ENCODE measurements at regions of chr5 and their contacts with region 1.

Region 1: DNA sequence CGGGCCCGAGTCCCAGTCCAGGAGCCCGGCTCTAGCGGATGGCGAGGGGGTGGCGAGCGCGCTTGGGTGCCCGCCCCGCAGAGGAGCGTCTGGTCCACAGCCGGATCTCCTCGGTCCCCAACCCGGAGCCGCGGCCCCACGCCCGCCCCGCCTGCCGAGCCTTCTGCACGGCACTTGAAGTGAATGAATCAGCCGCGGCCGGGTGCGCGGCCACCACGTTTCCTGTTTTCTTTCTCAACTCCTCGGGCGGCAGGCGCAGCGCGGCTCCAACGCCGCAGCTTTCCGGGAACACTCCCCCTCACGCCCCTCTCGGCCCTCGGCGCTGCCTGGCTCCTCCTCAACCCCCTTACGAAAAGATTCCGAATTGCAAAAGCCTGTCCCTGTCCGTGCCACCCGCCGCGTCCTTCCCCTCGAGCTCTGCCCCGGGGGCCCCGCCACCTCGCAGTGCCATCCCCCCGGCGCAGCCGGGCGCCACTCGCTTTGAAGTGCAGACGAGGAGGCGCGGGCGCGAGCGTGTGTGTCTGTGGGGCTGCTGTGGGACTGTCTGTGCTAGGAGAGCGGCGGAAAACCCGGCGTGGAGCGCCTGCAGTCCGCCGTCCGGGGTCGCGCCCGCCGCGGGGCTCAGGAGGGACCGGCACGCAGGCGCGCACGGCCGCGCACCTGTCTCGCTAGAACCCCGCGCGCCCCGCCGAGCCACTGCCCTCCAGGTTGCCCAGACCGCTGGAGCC is 456.6 kb downstream of the RAB3C start:
- DNase-seq: peak; percentile 84 to 92
- H3K4me3 ChIP-seq: peak overlapping the region; percentile 63 to 79
- H3K27ac ChIP-seq: peak overlapping the region; percentile 79 to 84
- H3K4me1 ChIP-seq: peaks cover 0 to 69% (median 15%) of the 10 kb centered on the region in 4 donors
- H3K27me3 ChIP-seq: no peaks in the 10 kb centered on the region
- CTCF ChIP-seq: no peak

Region 2: GRCh38 chr5:58922461-58923171 is 116.8 kb before region 1 on chr5:
- intact Hi-C with region 1: loop called (anchors 10 kb)
- DNase-seq: peak; percentile 84 to 97
- H3K4me3 ChIP-seq: peak overlapping the region; percentile 16 to 30
- H3K27ac ChIP-seq: peak overlapping the region; percentile 88 to 92
- H3K4me1 ChIP-seq: peaks cover 0 to 81% (median 58%) of the 10 kb centered on the region in 4 donors
- H3K27me3 ChIP-seq: no peaks in the 10 kb centered on the region
- CTCF ChIP-seq: peak in 1 of 2 experiments; percentile 22

Region 3: DNA sequence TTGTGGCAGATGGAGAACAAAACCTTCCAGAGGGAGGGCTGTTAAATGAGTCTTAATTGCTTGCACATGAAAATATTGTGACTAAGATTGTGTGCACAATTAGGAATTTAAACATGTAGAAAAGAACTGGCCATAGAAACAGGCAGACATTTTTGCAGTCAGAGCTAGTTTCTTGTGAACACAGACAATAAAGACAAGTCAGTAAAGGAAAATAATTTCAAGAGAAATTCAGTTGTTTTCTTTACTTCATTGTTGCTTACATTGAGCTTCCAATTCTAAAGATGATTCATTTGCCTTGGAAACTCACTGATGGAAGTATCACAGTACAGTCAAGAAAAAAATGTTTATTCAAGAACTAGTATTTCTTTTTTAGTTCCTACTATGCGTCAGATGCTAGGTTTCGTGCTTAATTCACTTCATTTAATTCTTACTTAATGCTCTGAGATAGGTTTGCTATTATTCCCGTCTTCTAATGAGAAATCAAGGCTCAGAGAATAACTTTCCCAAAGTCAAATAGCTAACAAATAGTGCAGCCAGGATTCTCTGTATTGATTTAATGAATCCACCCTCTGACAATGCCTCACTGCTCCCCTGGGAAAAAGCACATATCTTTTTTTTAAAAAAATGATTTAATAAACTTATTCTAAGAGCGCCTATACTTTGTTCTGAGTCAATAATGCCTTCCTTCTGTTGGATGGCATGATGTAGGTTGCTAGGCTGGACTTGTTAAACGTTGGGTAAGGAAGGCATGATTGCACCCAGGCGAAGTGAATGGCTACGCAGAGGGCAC is 124.8 kb after region 1 on chr5:
- intact Hi-C with region 1: loop called (anchors 10 kb)
- DNase-seq: no peak
- H3K4me3 ChIP-seq: no peak overlapping the region
- H3K27ac ChIP-seq: no peak overlapping the region
- H3K4me1 ChIP-seq: peaks cover 0 to 40% (median 7%) of the 10 kb centered on the region in 4 donors
- H3K27me3 ChIP-seq: no peaks in the 10 kb centered on the region
- CTCF ChIP-seq: no peak

Measured in tibial artery (tissue), 4 donors.